Mammary epithelial cell (primary cell): ENCODE measurements at regions of chr1 and their contacts with region 1.

Region 1: DNA sequence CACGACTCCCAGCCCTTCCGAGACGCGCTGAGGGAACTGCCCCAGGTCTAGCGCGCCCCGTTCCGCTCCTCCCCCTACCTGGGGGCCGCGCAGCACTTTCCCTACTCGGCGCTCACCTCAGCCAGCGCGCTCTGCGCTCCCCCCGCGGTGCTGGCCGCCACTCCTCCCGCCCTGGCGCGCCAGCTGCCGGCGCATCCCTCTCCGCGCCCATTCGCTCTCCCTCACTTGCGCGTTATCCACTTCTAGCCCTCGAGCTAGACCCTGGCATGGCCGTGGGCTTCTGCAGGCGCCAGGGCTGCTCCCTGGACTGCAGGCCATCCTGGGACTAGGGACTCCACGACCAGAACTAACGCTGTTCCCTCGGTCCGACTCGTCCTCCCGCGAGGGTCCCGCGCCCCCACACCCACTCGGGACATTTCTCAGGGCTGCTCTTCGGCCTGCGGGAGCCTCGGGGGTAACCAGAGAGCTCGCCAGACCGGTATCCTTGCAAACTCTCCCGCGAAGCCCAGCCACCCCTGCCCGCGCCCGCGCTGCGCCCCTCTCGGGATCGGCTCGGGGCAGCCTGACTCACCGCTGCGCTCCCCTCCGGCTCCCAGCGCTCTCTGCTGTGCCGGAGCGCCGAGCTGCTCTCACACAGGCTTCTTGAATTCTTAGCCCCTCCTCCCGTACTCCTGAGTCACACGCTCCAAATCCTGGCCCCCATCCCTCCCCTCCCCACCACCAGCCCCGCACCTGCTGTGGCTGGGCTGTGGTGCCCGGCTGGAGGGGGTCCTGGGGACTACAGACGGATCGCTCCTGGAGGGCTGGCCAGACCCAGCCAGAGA is at the start of gene NGF:
- DNase-seq: peak; percentile 31
- H3K4me3 ChIP-seq: peak within 1 kb of the TSS; percentile 35 to 48 (median 47)
- H3K27ac ChIP-seq: no peak within 1 kb of the TSS
- H3K4me1 ChIP-seq: peaks cover 9% of the 10 kb centered on the region
- H3K27me3 ChIP-seq: no peaks in the 10 kb centered on the region
- CTCF ChIP-seq: no peak
- total RNA-seq, gene NGF: 0.17 to 1.3 TPM

Region 2: GRCh38 chr1:115430441-115431116 is 92.7 kb after region 1 on chr1:
- CTCF ChIA-PET with region 1: no interaction called
- dilution Hi-C with region 1: no loop called
- in situ Hi-C with region 1: no loop called
- intact Hi-C with region 1: loop called (anchors 5 kb)
- DNase-seq: peak; percentile 96
- H3K4me3 ChIP-seq: no peak overlapping the region
- H3K27ac ChIP-seq: peak overlapping the region; percentile 58
- H3K4me1 ChIP-seq: peaks cover 55% of the 10 kb centered on the region
- H3K27me3 ChIP-seq: no peaks in the 10 kb centered on the region
- CTCF ChIP-seq: no peak